Astrocyte of the cerebellum (primary cell): ENCODE measurements at regions of chr10 and their contacts with region 1.

Region 1: DNA sequence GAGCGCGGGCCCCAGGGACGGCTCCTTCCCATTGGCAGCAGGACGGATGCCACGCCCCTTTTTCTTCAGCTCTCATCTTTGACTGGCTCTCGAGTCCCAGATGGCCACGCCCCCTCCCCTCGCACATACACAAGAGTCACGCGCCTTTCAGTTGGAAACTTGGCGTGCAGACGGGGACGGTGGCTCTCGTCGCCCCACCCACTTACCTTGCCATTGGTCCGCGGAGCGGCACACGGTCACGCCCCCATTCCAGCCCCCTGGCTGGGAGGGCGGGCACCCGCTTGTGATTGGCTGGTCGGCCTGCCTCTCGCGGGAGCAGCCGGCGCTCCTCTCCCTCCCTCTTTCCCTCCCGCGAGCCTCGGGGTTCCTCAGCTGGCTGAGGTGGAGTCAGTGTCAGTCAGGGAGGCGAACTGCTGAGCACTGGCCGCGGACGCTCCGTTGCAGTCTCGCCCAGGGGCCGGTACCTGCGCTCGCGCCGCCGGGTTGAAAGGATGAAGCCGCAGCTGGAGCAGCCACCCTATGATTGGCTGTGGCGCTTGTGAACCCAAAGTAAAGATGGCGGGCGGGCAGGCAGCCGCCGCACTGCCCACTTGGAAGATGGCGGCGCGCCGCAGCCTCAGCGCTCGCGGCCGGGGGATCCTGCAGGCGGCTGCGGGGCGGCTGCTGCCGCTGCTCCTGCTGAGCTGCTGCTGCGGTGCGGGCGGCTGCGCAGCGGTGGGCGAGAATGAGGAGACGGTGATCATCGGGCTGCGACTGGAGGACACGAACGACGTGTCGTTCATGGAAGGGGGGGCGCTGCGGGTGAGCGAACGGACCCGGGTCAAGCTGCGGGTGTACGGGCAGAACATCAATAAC is at the start of gene CNNM2:
- DNase-seq: peak; percentile 99
- H3K4me3 ChIP-seq: peak within 1 kb of the TSS; percentile 75
- CTCF ChIP-seq: no peak

Region 2: DNA sequence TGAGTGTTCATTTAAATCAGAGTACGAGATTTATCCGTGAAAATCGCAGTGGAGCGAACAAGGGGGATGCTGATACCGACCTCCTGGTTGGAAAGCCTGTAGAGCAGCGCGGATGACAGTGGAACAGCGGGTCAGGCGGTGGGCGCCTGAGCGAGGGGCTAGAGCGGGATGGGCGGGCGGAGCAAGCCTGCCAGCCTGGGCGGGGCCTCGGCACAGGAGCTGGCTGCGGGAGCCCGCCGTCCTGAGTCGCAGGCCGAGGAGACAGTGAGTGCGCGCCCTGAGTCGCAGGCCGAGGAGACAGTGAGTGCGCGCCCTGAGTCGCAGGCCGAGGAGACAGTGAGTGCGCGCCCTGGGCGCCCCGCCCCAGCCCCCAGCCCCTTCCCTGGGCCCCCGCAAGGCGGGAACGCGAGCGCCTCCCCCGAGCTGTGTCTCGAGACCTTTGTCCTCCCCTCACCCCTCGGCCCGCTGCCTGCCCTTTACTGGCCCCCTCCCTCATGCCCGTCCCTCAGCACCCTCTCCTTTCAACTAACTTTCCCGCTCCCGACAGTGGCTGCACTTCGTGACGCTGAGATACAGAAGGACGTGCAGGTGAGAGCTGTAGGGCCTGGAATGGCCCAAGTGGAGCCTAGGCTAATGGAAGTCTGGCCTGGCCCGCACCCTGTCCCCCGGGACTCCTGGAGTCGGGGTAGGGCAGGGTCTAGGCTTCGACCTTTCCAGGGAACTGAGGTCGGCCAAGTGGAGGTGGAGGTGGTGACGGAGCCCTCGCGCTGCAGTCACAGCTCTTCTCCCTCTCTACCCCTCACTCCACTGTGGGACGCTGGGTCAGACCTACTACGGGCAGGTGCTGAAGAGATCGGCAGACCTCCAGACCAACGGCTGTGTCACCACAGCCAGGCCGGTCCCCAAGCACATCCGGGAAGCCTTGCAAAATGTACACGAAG is 48.7 kb before region 1 on chr10 and contains the start of gene AS3MT:
- in situ Hi-C with region 1: no loop called
- DNase-seq: no peak
- H3K4me3 ChIP-seq: peak within 1 kb of the TSS; percentile 49
- CTCF ChIP-seq: no peak

Region 3: GRCh38 chr10:102962951-102963755 is 45.0 kb after region 1 on chr10:
- in situ Hi-C with region 1: no loop called
- DNase-seq: no peak
- H3K4me3 ChIP-seq: no peak overlapping the region
- CTCF ChIP-seq: no peak

Region 4: DNA sequence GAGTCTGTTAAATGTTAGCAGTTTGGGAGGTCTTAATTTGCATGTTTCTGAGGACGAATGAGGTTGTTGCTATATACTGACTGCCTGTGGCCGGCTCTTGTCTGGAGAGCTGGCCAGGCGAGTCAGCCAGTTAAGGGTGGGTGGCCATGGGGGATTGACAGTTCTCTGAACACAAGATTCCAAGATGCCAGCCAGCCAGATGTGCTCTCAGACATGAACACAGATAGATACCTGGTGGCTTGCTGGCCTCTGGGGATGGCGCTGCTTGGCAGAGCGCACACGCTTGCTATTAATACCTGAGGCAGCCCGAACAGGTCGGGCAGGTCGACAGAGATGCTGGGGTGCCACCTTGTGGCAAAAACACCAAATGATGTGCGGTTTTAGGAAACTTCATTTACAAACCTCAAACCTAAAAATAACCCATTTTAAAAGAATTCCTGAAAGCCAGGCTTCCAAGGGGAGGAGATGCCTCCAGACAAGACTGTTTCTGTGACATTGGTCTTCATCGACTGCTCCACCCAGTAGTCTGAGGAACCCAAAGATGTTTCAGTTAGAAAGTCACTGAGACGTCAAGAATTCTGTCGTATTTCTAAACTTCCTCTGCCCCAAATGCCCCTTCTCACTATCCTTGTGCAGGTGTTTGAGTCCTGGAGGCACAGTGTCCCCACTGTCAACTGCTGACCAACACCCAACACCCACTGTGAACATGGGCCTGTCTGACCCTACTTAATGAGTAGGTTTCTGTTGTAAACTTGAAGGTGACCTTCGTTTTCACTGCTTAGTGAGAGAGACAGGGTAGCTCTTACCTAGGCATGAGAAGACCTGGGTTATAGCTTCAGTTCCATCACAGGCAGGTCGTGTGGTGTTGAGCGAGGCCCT is 151.5 kb after region 1 on chr10:
- in situ Hi-C with region 1: loop called (anchors 25 kb)
- DNase-seq: peak; percentile 41
- H3K4me3 ChIP-seq: no peak overlapping the region
- CTCF ChIP-seq: peak; percentile 61

Region 5: DNA sequence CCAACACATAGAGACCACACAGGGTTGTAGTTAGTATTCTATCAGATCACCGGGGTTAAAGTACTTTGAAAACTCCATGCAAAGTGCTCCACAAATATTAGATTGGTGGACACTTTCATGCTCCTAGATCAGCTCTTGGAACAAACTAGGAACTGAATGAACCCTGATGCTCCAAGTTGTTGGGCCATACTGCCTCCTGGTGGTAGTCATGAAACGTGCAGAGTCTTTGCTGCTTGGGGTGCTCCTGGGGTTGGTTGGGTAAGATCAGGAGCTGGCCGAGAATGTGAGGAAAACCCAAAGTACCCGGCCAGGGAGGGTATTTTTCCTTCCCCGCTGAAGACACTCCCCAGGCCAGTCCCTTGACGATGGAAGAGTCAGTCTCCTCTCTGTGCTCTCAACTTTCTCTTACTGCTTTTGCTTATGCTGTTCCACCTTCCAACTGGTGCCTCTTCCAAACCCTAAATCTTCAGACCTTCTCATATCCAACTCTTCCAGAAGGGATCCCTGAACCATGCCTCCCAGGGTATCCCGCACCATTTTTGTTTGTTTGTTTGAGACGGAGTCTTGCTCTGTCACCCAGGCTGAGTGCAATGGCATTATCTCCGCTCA is 326.6 kb after region 1 on chr10:
- in situ Hi-C with region 1: loop called (anchors 5 kb)
- DNase-seq: peak; percentile 77
- H3K4me3 ChIP-seq: no peak overlapping the region
- CTCF ChIP-seq: peak; percentile 93